RWPE1 (cell line): ENCODE measurements at regions of chr1 and their contacts with region 1.

Region 1: DNA sequence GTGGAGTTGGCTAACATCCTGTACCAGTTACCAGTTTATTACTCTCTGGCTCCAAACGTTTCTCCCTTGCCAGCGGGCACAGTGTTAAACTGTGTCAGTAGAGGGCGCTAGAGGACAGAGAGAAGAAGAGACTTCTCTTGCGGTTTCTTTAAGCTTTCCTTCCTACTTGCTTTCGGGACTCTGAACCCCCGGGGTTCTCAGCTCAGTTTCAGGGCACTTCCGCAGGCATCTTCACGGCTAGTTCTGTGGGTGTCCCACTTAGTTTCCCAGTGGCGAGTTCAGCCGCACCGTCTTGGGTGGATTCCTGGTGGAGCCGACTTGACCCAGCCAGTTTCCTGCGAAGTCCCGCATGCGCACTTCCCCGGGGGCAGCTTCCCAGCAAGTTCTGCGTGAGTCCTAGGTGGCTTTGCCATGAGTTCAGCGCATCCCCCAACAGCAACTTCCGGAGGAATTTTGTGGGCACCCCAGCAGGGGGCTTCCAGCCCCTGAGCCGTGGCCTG is 37.9 kb upstream of the BTG2 start:
- DNase-seq: peak; percentile 74
- H3K27ac ChIP-seq: peak overlapping the region; percentile 63
- CTCF ChIP-seq: peak; percentile 94

Region 2: GRCh38 chr1:203031467-203031866 is 235.9 kb before region 1 on chr1:
- CTCF ChIA-PET with region 1: interaction called, 98 read pairs
- POLR2A ChIA-PET with region 1: no interaction called
- DNase-seq: no peak
- H3K27ac ChIP-seq: no peak overlapping the region
- CTCF ChIP-seq: no peak

Region 3: DNA sequence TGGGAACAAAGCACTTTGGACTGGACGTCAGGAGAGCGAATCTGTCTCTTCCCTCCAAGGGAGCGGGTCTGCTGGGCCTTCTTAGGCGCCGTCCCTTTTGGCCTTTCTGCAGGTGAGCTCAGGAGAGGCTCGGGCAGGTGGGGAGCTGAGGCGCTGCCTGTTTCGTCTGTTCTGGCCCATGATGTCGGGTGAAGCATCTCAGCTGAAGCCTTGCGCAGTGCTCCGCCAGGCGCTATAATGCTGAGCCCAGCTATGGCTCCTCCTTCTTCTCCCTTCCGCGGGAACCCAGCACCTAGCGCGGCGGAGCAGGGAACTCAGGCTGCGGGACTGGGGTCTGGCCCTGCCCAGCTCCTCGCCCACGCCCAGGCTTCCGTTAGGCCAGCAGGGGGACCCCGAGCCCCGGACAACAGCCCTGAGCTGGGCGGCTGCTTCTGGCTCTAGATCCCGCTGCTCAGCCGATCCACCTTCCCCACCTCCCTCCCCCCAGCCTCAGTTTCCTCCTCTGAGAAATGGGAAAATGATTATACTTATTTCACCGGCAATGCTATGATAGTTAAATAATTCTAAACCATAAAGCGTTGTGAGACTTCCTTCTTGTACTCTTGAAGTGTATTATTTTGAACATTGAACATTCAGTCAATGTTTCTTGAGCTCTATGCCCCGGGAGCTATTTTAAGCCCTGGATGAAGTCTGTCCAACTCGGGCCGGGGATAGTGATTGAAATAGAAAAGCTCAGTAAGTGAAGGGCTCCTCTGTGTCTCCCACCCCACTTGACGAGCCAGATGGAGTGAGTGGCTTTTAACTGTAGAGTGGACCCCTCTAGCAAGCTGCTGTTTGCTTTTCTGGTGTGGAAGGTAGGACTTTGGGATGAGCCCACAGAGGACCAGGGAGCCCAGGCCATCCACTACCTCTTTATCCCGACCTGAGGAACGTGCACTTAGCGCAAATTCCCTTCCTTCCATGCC is 149.5 kb before region 1 on chr1:
- CTCF ChIA-PET with region 1: interaction called, 12 read pairs
- POLR2A ChIA-PET with region 1: no interaction called
- DNase-seq: peak; percentile 83
- H3K27ac ChIP-seq: no peak overlapping the region
- CTCF ChIP-seq: peak; percentile 60

Region 4: GRCh38 chr1:203229471-203230135 is 37.8 kb before region 1 on chr1 and contains the start of gene CHIT1:
- CTCF ChIA-PET with region 1: interaction called, 22 read pairs
- POLR2A ChIA-PET with region 1: no interaction called
- DNase-seq: no peak
- H3K27ac ChIP-seq: no peak within 1 kb of the TSS
- CTCF ChIP-seq: no peak

Region 5: DNA sequence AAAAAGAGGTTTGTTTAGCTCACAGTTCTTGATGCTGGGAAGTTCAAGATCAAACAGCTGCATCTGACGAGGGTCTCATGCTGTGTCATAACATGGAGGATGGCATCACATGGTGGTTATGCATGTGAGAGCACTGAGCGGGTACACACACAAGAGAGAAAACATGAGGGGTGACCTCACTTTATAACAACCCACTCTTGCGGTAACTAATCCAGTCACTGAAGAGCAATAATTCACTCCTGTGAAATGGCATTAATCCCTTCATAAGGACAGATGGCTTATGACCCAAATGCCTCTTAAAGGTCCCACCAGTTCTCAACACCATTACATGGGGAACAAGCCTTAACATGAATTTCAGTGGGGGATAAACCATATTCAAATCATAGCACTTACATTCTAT is 14.7 kb before region 1 on chr1:
- CTCF ChIA-PET with region 1: interaction called, 32 read pairs
- POLR2A ChIA-PET with region 1: no interaction called
- DNase-seq: no peak
- H3K27ac ChIP-seq: no peak overlapping the region
- CTCF ChIP-seq: no peak

Region 6: GRCh38 chr1:203296460-203297073 is 29.2 kb after region 1 on chr1:
- CTCF ChIA-PET with region 1: interaction called, 13 read pairs
- POLR2A ChIA-PET with region 1: no interaction called
- DNase-seq: no peak
- H3K27ac ChIP-seq: no peak overlapping the region
- CTCF ChIP-seq: no peak

Region 7: GRCh38 chr1:203326830-203327683 is 59.7 kb after region 1 on chr1:
- CTCF ChIA-PET with region 1: interaction called, 291 read pairs
- POLR2A ChIA-PET with region 1: no interaction called
- DNase-seq: peak; percentile 99
- H3K27ac ChIP-seq: peak overlapping the region; percentile 90
- CTCF ChIP-seq: no peak

Region 8: GRCh38 chr1:203390298-203390697 is 122.9 kb after region 1 on chr1:
- CTCF ChIA-PET with region 1: no interaction called
- POLR2A ChIA-PET with region 1: no interaction called
- DNase-seq: no peak
- H3K27ac ChIP-seq: no peak overlapping the region
- CTCF ChIP-seq: no peak